T-cell (primary cell): ENCODE measurements at regions of chr12 and their contacts with region 1.

Region 1: DNA sequence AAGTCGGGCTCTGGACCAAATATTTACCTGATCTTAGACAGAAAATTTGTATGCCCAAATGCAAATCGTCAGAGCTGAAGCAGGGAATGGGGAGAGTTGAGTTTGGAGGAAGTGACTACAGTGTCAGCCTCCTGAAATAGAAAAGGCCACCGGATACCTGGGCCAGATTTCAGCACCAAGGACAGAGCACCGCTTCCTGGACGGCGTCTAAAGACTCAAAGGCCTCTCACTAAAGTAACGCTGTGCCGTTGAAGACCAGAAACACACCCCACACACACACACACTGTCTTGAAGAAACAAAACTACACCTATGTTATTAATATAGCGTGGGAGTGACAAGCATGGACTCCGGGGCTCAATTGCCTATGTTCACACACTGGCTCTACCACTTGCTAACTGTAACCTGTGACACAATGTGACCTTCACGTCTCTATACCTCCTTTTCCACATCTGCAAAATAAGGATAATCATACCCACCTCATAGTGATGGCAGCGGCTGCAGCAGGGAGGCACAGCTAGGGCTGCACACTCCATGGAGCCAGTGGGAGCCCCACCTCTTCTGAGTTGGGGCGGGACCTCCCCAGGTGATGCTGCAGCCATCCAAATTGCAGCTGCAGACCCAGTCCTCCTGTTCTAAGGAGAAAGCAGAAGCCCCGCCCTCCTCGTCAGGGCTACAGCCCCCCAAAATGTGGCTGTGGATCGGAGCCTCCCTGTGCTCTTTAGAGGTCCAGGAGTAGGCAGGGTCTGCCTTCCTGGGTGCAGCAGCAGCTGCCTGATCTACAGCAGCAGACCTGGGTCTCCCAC is 35.6 kb downstream of the KRT76 start:
- DNase-seq: peak in 33 of 35 experiments; percentile 4 to 76 (median 42)
- ATAC-seq: peak; percentile 34 to 59 (median 52)
- H3K4me3 ChIP-seq: no peak overlapping the region
- H3K4me3 Mint-ChIP-seq: no peak overlapping the region
- H3K27ac ChIP-seq: no peak overlapping the region
- H3K27ac Mint-ChIP-seq: no peak overlapping the region
- H3K4me1 ChIP-seq: no peaks in the 10 kb centered on the region
- H3K4me1 Mint-ChIP-seq: no peaks in the 10 kb centered on the region
- H3K27me3 ChIP-seq: peaks cover 0 to 35% of the 10 kb centered on the region in 2 experiments
- H3K27me3 Mint-ChIP-seq: peaks cover 5 to 11% of the 10 kb centered on the region in 2 donors

Region 2: GRCh38 chr12:52698651-52699340 is 42.8 kb before region 1 on chr12:
- CTCF ChIA-PET with region 1: no interaction called
- POLR2A ChIA-PET with region 1: interaction called in 1 of 2 experiments, 10 read pairs
- DNase-seq: no peak
- ATAC-seq: no peak
- H3K4me3 ChIP-seq: no peak overlapping the region
- H3K4me3 Mint-ChIP-seq: no peak overlapping the region
- H3K27ac ChIP-seq: no peak overlapping the region
- H3K27ac Mint-ChIP-seq: no peak overlapping the region
- H3K4me1 ChIP-seq: no peaks in the 10 kb centered on the region
- H3K4me1 Mint-ChIP-seq: peaks cover 0 to 5% (median 0%) of the 10 kb centered on the region in 3 donors
- H3K27me3 ChIP-seq: peaks cover 0 to 31% of the 10 kb centered on the region in 2 experiments
- H3K27me3 Mint-ChIP-seq: peaks cover 11 to 12% of the 10 kb centered on the region in 2 donors

Region 3: DNA sequence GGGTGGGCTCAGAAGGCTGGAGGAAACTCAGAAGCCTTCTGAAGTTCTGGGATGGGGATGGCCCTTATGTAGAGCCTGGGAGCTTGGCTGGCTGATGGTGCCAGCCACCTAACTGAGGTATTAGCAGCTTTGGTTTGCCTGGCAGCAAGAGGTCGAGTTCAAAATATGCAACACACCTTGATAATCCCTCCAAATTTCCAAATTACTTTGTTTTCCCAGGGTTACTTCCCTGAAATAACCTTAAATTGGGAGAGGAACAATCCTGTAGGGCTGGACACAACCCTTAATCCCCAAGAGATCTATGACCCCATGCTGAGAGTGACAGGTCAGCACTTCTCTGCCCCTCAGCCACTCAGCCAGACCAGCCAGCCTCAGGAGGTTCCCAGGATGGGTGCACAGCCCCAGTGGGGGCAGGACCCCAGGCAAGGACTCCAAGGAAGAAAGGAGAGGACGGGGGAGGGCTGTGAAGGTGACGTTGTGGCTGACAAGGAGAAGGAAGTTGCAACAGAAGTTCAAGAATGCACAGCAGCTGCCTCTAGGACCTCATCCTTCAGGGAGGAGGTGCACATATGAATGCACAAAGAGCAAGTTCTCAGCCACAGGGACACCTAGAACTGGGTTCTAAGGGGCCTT is 19.6 kb before region 1 on chr12:
- CTCF ChIA-PET with region 1: no interaction called
- POLR2A ChIA-PET with region 1: no interaction called
- DNase-seq: no peak
- ATAC-seq: no peak
- H3K4me3 ChIP-seq: no peak overlapping the region
- H3K4me3 Mint-ChIP-seq: no peak overlapping the region
- H3K27ac ChIP-seq: no peak overlapping the region
- H3K27ac Mint-ChIP-seq: no peak overlapping the region
- H3K4me1 ChIP-seq: no peaks in the 10 kb centered on the region
- H3K4me1 Mint-ChIP-seq: no peaks in the 10 kb centered on the region
- H3K27me3 ChIP-seq: peaks cover 0 to 24% of the 10 kb centered on the region in 2 experiments
- H3K27me3 Mint-ChIP-seq: no peaks in the 10 kb centered on the region

Region 4: DNA sequence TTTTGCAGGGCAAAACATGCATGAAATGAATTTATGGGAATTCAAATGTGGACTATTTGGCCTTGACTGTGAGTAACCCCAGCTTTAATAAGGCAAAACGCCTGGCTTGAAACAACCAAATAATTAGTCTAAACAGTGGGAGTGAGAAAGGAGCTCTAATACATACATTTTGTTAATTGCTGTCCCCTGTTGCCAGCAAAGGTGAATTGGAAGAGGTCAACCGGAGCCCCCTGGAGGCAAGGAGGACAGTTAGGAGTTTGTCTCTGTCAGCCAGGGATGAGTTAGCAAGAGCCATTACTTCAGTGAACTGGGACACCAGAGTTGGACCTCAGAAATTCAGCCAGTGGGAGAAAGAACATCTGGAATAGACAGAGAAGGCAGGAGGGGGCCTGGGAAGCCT is 18.1 kb after region 1 on chr12:
- CTCF ChIA-PET with region 1: no interaction called
- POLR2A ChIA-PET with region 1: no interaction called
- DNase-seq: no peak
- ATAC-seq: no peak
- H3K4me3 ChIP-seq: no peak overlapping the region
- H3K4me3 Mint-ChIP-seq: no peak overlapping the region
- H3K27ac ChIP-seq: no peak overlapping the region
- H3K27ac Mint-ChIP-seq: no peak overlapping the region
- H3K4me1 ChIP-seq: no peaks in the 10 kb centered on the region
- H3K4me1 Mint-ChIP-seq: no peaks in the 10 kb centered on the region
- H3K27me3 ChIP-seq: peaks cover 0 to 18% of the 10 kb centered on the region in 2 experiments
- H3K27me3 Mint-ChIP-seq: peaks cover 0 to 7% of the 10 kb centered on the region in 2 donors